ENCODE measurements at regions of chr2 and their contacts with region 1.

Region 1: DNA sequence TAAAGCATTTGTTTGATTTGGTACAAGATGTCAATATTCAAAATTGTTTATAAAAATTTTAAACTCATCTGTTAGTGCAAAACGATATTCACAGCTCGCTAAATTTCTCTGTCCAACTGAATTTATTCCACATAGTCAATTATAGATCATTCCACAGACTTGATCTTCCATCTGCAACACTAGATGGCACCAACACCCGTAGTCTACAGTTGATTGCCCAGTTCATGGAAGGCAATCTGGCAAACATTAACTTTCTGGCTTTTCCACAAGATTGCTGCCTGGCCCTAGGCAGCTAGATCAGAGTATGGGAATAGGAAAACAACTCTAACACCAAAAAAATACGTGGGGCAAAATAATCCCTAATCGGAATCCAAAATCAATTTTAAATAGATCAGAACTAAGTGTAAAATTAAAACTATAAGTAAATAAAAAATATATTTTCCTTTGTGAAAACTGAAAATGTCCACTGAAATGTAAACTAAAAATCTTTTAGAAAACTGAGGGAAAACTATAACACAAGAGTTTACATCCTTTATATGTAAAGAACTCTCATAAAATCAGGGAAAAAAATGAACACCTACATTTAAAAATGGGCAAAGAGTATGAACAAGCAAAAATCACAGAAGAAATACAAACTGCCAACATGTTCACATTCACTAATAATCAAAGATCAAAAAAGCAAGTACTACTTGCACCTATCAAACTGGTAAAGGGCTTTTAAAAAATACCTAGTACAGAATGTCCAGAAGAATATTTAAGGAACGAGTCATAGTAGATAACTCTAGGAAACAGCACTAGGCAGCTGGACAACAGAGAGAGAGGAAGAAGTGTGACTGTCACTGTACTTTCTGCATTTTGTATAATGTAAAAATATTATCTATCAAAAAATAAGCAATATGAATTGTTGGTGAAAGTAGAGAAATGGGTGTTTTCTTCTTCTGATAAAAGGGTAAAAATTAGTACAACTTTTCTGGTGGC is 35.0 kb downstream of the RTN4 start:
- DNase-seq: no peak
- ATAC-seq: peak; percentile 89
- H3K4me3 ChIP-seq: no peak overlapping the region
- H3K27ac ChIP-seq: no peak overlapping the region
- H3K4me1 ChIP-seq: peaks cover 0 to 4% of the 10 kb centered on the region in 2 donors
- H3K27me3 ChIP-seq: no peaks in the 10 kb centered on the region

Region 2: DNA sequence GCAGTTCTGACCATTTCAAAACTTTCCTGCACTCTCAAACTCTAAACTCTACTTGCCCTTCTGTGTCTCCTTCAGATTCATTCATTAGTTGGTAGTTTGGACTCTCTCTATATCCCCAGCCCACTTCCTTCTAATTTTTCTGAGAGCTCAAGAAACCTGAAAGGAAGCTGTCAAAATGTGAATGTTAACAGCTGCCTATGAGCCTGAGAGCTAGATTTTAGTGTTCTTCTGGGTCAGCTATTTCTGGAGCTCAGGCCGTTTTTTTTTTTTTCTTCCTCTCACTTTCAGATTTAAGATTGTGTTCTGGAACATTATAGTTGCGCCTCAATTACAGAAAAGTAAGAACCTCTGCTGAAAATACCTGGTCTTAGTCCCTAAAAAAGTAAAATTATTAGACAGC is 38.1 kb before region 1 on chr2:
- intact Hi-C with region 1: loop called in 1 of 2 experiments (anchors 5 kb)
- DNase-seq: no peak
- ATAC-seq: no peak
- H3K4me3 ChIP-seq: peak overlapping the region in 1 of 2 donors; percentile 8
- H3K27ac ChIP-seq: no peak overlapping the region
- H3K4me1 ChIP-seq: peaks cover 2 to 24% of the 10 kb centered on the region in 2 donors
- H3K27me3 ChIP-seq: no peaks in the 10 kb centered on the region

Region 3: GRCh38 chr2:55168221-55169154 is 153.2 kb after region 1 on chr2:
- intact Hi-C with region 1: loop called (anchors 2 to 10 kb)
- DNase-seq: peak in 1 of 2 donors; percentile 67
- ATAC-seq: peak; percentile 84
- H3K4me3 ChIP-seq: no peak overlapping the region
- H3K27ac ChIP-seq: peak overlapping the region; percentile 77 to 91
- H3K4me1 ChIP-seq: peaks cover 2 to 4% of the 10 kb centered on the region in 2 donors
- H3K27me3 ChIP-seq: no peaks in the 10 kb centered on the region

Measured in aorta (tissue), 5 donors.